Activated CD4-positive, alpha-beta memory T cell treated with anti-CD3 and anti-CD28 coated beads for 36 hours (primary cell): ENCODE measurements at regions of chr1 and their contacts with region 1.

Region 1: GRCh38 chr1:40691538-40692428 is at the start of gene NFYC:
- DNase-seq: peak; percentile 98
- H3K4me3 Mint-ChIP-seq: peak within 1 kb of the TSS; percentile 90
- H3K27ac Mint-ChIP-seq: peak within 1 kb of the TSS; percentile 90
- H3K4me1 Mint-ChIP-seq: peaks cover 59% of the 10 kb centered on the region
- H3K27me3 Mint-ChIP-seq: no peaks in the 10 kb centered on the region
- total RNA-seq, gene NFYC: 52.6 to 61.7 TPM

Region 2: DNA sequence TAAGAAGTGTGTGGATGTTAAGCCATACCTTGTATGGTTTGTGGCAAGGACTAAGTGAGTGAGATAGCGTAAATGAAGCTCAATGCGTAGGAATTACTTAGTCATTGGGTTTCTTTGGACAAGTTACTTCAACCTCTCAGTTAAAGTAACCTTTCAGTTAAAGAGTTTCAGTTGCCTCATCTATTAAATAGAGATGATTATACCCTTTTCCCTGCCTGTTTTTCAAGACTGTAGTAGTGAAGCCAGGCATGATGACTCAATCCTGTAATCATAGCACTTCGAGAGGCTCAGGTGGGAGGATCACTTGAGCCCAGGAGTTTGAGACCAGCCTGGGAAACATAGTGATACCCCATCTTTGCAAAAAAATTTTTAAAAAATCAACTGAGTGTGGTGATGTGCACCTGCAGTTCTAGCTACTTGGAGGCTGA is 427.4 kb before region 1 on chr1:
- CTCF ChIA-PET with region 1: no interaction called
- POLR2A ChIA-PET with region 1: no interaction called
- intact Hi-C with region 1: loop called (anchors 5 kb)
- DNase-seq: peak; percentile 59
- H3K4me3 Mint-ChIP-seq: peak overlapping the region; percentile 16
- H3K27ac Mint-ChIP-seq: peak overlapping the region; percentile 91
- H3K4me1 Mint-ChIP-seq: peaks cover 63% of the 10 kb centered on the region
- H3K27me3 Mint-ChIP-seq: no peaks in the 10 kb centered on the region

Region 3: GRCh38 chr1:40531381-40532061 is 160.3 kb before region 1 on chr1 and contains the start of gene ZNF684:
- CTCF ChIA-PET with region 1: interaction called, 4 read pairs
- POLR2A ChIA-PET with region 1: interaction called, 4 read pairs
- intact Hi-C with region 1: loop called (anchors 5 kb)
- DNase-seq: peak; percentile 92
- H3K4me3 Mint-ChIP-seq: peak within 1 kb of the TSS; percentile 96
- H3K27ac Mint-ChIP-seq: peak within 1 kb of the TSS; percentile 84
- H3K4me1 Mint-ChIP-seq: peaks cover 19% of the 10 kb centered on the region
- H3K27me3 Mint-ChIP-seq: peaks cover 2% of the 10 kb centered on the region
- total RNA-seq, gene ZNF684: 4.8 to 5.9 TPM

Region 4: GRCh38 chr1:40732756-40733301 is 41.0 kb after region 1 on chr1:
- CTCF ChIA-PET with region 1: interaction called, 10 read pairs
- POLR2A ChIA-PET with region 1: interaction called, 6 read pairs
- intact Hi-C with region 1: no loop called
- DNase-seq: no peak
- H3K4me3 Mint-ChIP-seq: no peak overlapping the region
- H3K27ac Mint-ChIP-seq: no peak overlapping the region
- H3K4me1 Mint-ChIP-seq: peaks cover 46% of the 10 kb centered on the region
- H3K27me3 Mint-ChIP-seq: no peaks in the 10 kb centered on the region

Region 5: GRCh38 chr1:40774266-40774998 is 82.6 kb after region 1 on chr1:
- CTCF ChIA-PET with region 1: interaction called, 34 read pairs
- POLR2A ChIA-PET with region 1: no interaction called
- intact Hi-C with region 1: no loop called
- DNase-seq: peak; percentile 74
- H3K4me3 Mint-ChIP-seq: no peak overlapping the region
- H3K27ac Mint-ChIP-seq: no peak overlapping the region
- H3K4me1 Mint-ChIP-seq: no peaks in the 10 kb centered on the region
- H3K27me3 Mint-ChIP-seq: no peaks in the 10 kb centered on the region